Posterior vena cava (tissue), 2 donors: ENCODE measurements at regions of chr6 and their contacts with region 1.

Region 1: DNA sequence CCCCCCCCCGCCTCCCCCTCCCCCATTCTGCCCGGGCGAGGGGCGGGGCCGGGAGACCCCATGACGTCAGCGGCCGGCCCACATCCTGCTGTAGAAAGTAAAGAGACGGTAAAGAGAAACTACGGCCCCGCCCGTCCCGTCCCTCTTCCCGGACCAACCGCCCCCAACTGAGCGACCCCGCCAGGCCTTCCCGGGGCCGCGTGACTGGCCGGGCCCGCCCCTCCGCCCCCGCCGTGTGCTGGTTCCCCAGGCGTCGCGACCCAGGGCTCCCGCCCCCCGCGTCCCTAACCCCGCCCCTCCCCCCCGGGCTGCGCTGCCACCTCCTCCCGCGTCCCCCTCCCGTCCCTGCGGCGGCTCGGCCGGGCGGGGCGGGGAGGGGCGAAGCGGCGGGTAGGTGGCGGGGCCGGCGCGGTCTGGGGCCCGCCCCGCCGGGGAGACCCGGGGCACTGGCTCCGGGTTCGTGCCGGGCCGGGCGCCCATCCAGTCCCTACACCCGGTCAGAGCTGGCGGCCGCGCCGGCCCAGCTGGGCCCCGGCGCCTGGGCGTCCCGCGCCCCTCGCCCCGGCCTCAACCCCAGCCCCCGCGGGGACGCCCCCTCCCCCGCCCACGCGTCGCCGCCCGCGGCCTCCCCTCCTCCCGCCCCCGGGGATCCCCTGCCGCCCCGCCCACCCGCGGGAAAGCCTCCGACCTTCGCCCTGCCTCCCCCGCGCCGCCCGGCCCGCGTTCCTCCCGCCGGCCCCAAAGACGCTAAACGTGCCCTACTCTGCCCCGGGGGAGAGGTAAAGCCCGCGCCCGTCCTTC is 636 bp upstream of the HIVEP1 start:
- DNase-seq: peak; percentile 99

Region 2: GRCh38 chr6:11762794-11763459 is 248.5 kb before region 1 on chr6:
- intact Hi-C with region 1: loop called in 1 of 2 experiments (anchors 5 kb)
- DNase-seq: no peak